Gastrocnemius medialis (tissue), 4 donors: ENCODE measurements at regions of chr15 and their contacts with region 1.

Region 1: DNA sequence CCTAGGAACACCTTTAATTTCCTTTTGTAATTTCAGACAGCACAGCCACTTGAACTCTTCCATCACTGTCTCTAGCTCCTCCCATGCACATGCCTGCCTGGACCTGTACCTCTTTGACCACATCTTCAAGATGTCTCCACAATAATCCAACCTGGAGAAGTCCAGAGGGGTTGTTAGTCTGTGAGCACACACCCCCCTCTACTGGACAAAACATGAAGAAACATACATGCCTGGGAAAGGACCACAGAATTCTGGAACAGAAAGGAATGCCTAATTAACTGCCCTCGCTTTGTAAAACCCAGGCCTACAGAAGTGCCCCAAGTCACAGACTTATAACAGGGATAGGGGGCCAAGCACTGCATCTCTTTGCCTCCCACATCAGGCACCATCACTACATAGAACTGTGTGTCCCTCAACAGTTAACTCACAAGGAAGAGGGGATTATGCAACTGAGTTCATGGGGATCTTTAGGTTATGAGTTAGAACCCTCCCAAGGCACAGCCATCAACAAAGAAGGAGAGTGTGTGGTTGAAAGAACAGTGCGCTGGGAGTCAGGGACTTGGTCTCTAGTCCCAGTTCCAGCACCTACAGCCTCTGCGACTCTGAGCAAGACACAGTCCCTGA is 61.7 kb downstream of the FMN1 start:
- DNase-seq: no peak
- ATAC-seq: peak; percentile 49 to 53
- H3K4me3 ChIP-seq: no peak overlapping the region
- H3K27ac ChIP-seq: no peak overlapping the region
- H3K4me1 ChIP-seq: peaks cover 29 to 46% of the 10 kb centered on the region in 2 donors
- H3K27me3 ChIP-seq: no peaks in the 10 kb centered on the region
- CTCF ChIP-seq: peak; percentile 41 to 71 (median 65)
- POLR2A ChIP-seq: no peak

Region 2: GRCh38 chr15:32651229-32651837 is 481.5 kb before region 1 on chr15:
- in situ Hi-C with region 1: loop called in 2 of 4 experiments (anchors 25 kb)
- intact Hi-C with region 1: no loop called
- DNase-seq: peak in 1 of 2 donors; percentile 9
- ATAC-seq: peak in 1 of 2 donors; percentile 78
- H3K4me3 ChIP-seq: no peak overlapping the region
- H3K27ac ChIP-seq: no peak overlapping the region
- H3K4me1 ChIP-seq: no peaks in the 10 kb centered on the region
- H3K27me3 ChIP-seq: no peaks in the 10 kb centered on the region
- CTCF ChIP-seq: peak; percentile 30 to 81 (median 61)
- POLR2A ChIP-seq: no peak

Region 3: GRCh38 chr15:33021806-33022389 is 110.9 kb before region 1 on chr15:
- in situ Hi-C with region 1: loop called in 2 of 4 experiments (anchors 5 to 10 kb)
- intact Hi-C with region 1: loop called (anchors 1 kb)
- DNase-seq: peak in 1 of 2 donors; percentile 19
- ATAC-seq: peak; percentile 80 to 90
- H3K4me3 ChIP-seq: peak overlapping the region in 1 of 4 donors; percentile 21
- H3K27ac ChIP-seq: peak overlapping the region; percentile 72 to 85 (median 76)
- H3K4me1 ChIP-seq: peaks cover 15 to 25% of the 10 kb centered on the region in 2 donors
- H3K27me3 ChIP-seq: no peaks in the 10 kb centered on the region
- CTCF ChIP-seq: peak in 4 of 5 experiments; percentile 50 to 64 (median 58)
- POLR2A ChIP-seq: no peak

Region 4: DNA sequence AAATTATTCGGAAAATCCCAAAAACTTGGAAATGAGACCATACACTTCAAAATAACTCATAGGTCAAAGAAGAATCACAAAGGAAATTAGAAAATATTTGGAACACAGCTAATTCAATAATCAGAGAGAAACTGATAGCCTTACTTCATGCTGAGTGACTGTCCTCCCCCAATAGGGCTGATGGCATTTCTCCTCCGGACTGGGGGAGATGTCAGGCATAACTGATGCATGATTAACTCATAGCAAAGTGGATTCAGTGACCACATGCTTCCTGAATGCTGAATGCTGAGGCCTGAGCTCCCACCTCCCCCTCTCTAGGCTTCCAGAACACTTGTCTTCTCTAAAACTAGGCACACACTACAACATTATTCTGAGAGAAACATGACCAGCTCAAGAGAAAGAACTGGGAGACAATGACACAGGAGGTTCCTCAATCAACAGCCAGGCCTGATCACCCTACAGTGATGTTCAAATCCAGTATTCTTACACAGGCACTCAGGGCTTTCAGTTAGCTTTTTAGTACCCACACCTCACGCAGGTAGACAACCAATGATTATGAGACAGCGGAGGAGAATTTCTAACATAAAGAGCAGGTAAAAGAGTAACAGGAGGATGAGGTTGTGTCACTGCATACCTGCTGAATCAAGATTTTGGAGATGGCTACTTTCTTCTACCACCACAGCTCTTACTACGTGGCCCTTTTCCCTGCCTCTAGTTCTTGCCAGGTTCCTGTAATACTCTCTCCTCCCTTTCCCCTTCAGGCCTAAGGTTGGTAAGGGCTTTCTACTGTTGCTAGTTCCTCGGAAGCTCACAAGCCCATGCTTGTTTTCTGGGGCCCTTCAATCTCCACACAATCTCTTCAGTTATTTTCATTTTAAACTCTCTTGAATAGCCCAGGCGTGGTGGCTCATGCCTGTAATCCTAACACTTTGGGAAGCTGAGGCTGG is 34.5 kb before region 1 on chr15:
- in situ Hi-C with region 1: loop called in 1 of 4 experiments (anchors 5 kb)
- intact Hi-C with region 1: no loop called
- DNase-seq: no peak
- ATAC-seq: no peak
- H3K4me3 ChIP-seq: no peak overlapping the region
- H3K27ac ChIP-seq: no peak overlapping the region
- H3K4me1 ChIP-seq: peaks cover 0 to 4% of the 10 kb centered on the region in 2 donors
- H3K27me3 ChIP-seq: no peaks in the 10 kb centered on the region
- CTCF ChIP-seq: no peak
- POLR2A ChIP-seq: no peak

Region 5: DNA sequence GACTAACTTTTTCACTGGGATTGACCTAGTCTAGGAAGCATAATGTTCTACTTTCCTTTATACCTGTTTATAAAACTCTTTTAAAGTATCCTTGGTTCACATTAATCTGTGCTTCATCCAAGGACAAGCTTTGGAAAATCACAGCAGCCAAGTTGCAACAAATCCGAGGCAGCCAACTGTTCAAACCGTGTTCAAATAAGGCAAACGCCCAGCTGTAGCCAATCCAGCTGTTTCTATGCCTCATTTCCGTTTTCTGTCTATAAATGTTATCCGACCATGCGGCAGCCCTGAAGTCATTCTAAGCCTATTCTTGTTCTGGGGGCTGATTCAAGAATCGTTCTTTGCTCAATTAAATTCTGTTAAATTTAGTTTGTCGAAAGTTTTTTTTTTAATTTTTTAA is 16.6 kb before region 1 on chr15:
- in situ Hi-C with region 1: no loop called
- intact Hi-C with region 1: no loop called
- DNase-seq: no peak
- ATAC-seq: no peak
- H3K4me3 ChIP-seq: no peak overlapping the region
- H3K27ac ChIP-seq: no peak overlapping the region
- H3K4me1 ChIP-seq: peaks cover 0 to 7% of the 10 kb centered on the region in 2 donors
- H3K27me3 ChIP-seq: no peaks in the 10 kb centered on the region
- CTCF ChIP-seq: no peak
- POLR2A ChIP-seq: no peak

Region 6: GRCh38 chr15:33201491-33202231 is 68.8 kb after region 1 on chr15:
- in situ Hi-C with region 1: no loop called
- intact Hi-C with region 1: loop called (anchors 5 kb)
- DNase-seq: peak; percentile 76 to 83
- ATAC-seq: peak; percentile 98 to 99
- H3K4me3 ChIP-seq: peak overlapping the region; percentile 20 to 35 (median 23)
- H3K27ac ChIP-seq: peak overlapping the region; percentile 41 to 68 (median 57)
- H3K4me1 ChIP-seq: peaks cover 18 to 21% of the 10 kb centered on the region in 2 donors
- H3K27me3 ChIP-seq: no peaks in the 10 kb centered on the region
- CTCF ChIP-seq: peak in 3 of 5 experiments; percentile 19 to 43 (median 26)
- POLR2A ChIP-seq: peak in 1 of 2 donors; percentile 15

Region 7: DNA sequence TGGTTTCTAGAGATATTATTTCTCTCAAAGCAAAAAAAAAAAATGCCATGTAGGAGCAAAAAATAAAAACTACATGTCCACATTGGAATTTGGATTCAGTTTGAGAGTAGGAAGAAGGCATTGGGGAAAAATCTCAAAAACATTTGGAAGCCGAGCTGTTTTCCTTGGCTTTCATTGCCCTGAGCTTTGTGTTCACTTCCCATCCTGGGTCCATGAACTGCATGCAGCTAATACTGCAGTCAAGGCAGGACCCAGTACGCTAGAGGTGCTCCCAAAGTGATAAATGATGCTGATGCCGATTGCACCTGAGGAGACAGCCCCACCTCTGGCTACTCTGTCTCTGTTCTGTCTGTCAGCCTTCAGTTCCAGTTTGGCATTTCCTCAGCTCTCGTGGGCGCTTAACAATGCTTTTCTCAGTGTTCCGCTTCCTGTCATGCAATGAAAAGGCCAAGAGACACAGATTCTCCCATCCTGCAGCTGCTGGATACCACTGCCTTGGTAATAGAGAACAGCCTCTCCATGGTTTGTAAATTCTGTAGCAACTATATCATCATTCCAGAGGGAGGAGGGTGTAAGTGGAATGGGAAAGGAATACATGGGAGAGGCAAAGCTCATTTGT is 359.7 kb after region 1 on chr15:
- in situ Hi-C with region 1: no loop called
- intact Hi-C with region 1: no loop called
- DNase-seq: no peak
- ATAC-seq: no peak
- H3K4me3 ChIP-seq: no peak overlapping the region
- H3K27ac ChIP-seq: no peak overlapping the region
- H3K4me1 ChIP-seq: no peaks in the 10 kb centered on the region
- H3K27me3 ChIP-seq: no peaks in the 10 kb centered on the region
- CTCF ChIP-seq: no peak
- POLR2A ChIP-seq: no peak

Region 8: GRCh38 chr15:33788906-33789540 is 656.2 kb after region 1 on chr15:
- in situ Hi-C with region 1: no loop called
- intact Hi-C with region 1: no loop called
- DNase-seq: no peak
- ATAC-seq: no peak
- H3K4me3 ChIP-seq: no peak overlapping the region
- H3K27ac ChIP-seq: no peak overlapping the region
- H3K4me1 ChIP-seq: no peaks in the 10 kb centered on the region
- H3K27me3 ChIP-seq: no peaks in the 10 kb centered on the region
- CTCF ChIP-seq: no peak
- POLR2A ChIP-seq: no peak